ENCODE measurements at regions of chr1 and their contacts with region 1.

Region 1: GRCh38 chr1:23867953-23868556 is at the start of gene FUCA1:
- DNase-seq: peak; percentile 96
- ATAC-seq: peak; percentile 97
- total RNA-seq, gene FUCA1: 12.2 TPM

Region 2: GRCh38 chr1:23651069-23651808 is 216.8 kb before region 1 on chr1:
- intact Hi-C with region 1: no loop called
- DNase-seq: peak; percentile 75
- ATAC-seq: peak; percentile 95

Region 3: GRCh38 chr1:23772049-23772853 is 95.8 kb before region 1 on chr1:
- intact Hi-C with region 1: loop called (anchors 2 kb)
- DNase-seq: peak; percentile 95
- ATAC-seq: peak; percentile 80

Region 4: DNA sequence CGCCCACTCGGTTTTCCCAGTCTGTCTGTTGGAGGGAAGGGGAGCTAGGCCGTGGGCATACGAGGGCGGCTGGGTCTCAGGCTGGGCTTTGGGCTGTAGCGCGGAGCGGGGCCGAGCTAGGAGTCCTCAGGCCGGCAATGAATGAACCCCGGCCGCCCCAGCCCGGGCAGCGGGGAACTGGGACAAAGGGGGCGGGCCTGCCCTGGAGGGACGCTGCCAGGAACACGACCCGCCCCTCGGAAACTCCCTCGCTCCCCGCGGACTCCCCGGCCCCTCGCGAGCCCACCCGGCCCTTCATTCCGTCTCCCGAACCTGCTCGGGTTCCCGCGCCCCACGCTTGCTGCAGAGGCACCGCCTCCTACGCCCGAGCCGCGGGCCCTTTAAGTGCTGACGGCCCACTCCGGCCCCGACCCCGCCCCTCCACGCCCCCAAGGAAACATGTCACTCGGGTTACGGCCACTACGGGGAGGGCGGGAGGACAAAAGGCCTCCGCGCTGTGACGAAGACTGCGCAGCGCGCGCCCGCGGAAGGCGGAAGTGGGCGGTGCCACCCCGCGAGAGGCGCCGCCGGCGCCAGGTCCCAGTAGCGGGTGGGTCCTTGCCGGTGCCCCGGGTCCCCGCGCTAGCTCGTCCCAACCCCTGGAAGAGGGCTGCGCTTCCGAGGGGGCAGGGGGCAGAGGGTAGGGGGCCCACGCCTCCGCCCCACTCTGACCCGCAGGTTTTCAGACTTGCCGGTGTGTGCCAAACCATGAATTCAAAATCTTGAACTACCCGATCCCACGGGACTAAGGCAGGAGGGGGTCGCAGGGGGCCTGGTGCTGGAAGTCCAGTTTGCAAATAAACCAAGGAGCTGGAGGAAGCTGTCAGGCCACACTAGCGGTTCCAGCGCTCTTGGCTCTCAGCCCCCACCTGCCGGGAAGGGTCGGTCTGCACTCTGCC is 67.4 kb before region 1 on chr1 and contains the start of gene GALE:
- intact Hi-C with region 1: loop called (anchors 5 kb)
- DNase-seq: peak; percentile 98
- ATAC-seq: peak; percentile 96
- total RNA-seq, gene GALE: 7.8 TPM

Region 5: GRCh38 chr1:23825076-23825761 is 42.8 kb before region 1 on chr1 and contains the start of gene HMGCL:
- intact Hi-C with region 1: loop called (anchors 5 kb)
- DNase-seq: peak; percentile 95
- ATAC-seq: peak; percentile 98
- total RNA-seq, gene HMGCL: 32.8 TPM

Region 6: DNA sequence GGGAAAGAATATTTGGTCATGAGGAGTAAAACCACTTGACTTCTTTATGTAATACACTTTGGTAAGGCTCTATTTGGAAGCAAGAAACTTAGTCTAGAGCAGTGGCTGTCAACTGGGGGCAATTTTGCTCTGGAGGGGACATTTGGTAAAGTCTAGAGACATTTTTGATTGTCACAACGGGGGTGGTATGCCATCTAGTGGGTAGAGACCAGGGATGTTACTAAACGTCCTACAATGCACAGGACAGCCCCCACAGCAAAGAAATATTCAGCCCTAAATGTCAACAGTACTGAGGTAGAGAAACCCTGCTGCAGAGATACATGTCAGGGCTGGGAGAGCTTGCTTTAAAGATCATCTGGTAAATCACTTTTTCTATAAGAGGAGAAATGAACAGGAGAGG is 13.5 kb before region 1 on chr1:
- intact Hi-C with region 1: no loop called
- DNase-seq: no peak
- ATAC-seq: no peak

Region 7: GRCh38 chr1:23908493-23909341 is 40.7 kb after region 1 on chr1:
- intact Hi-C with region 1: no loop called
- DNase-seq: no peak
- ATAC-seq: peak; percentile 63

Measured in Right ventricle myocardium inferior (tissue), 1 donor.